Ascending aorta (tissue), 2 donors: ENCODE measurements at regions of chr7 and their contacts with region 1.

Region 1: GRCh38 chr7:113118074-113118959 is at the start of gene SMIM30:
- DNase-seq: peak; percentile 73 to 97
- H3K4me3 ChIP-seq: peak within 1 kb of the TSS; percentile 77 to 79
- H3K27ac ChIP-seq: peak within 1 kb of the TSS; percentile 56 to 75
- H3K4me1 ChIP-seq: peaks cover 0 to 3% of the 10 kb centered on the region in 2 donors
- H3K27me3 ChIP-seq: no peaks in the 10 kb centered on the region
- CTCF ChIP-seq: no peak
- total RNA-seq, gene SMIM30: 35.2 TPM

Region 2: GRCh38 chr7:112743811-112744210 is 374.5 kb before region 1 on chr7:
- intact Hi-C with region 1: no loop called
- DNase-seq: no peak
- H3K4me3 ChIP-seq: no peak overlapping the region
- H3K27ac ChIP-seq: no peak overlapping the region
- H3K4me1 ChIP-seq: no peaks in the 10 kb centered on the region
- H3K27me3 ChIP-seq: no peaks in the 10 kb centered on the region
- CTCF ChIP-seq: no peak

Region 3: GRCh38 chr7:112789817-112790585 is 328.3 kb before region 1 on chr7 and contains the start of gene TMEM168:
- intact Hi-C with region 1: loop called (anchors 2 kb)
- DNase-seq: peak in 1 of 2 donors; percentile 87
- H3K4me3 ChIP-seq: peak within 1 kb of the TSS; percentile 90 to 99
- H3K27ac ChIP-seq: peak within 1 kb of the TSS; percentile 92 to 93
- H3K4me1 ChIP-seq: peaks cover 0 to 6% of the 10 kb centered on the region in 2 donors
- H3K27me3 ChIP-seq: no peaks in the 10 kb centered on the region
- CTCF ChIP-seq: peak in 1 of 3 experiments; percentile 3
- total RNA-seq, gene TMEM168: 8.4 TPM

Region 4: GRCh38 chr7:112939574-112940314 is 178.6 kb before region 1 on chr7:
- intact Hi-C with region 1: loop called (anchors 10 kb)
- DNase-seq: peak; percentile 98 to 100
- H3K4me3 ChIP-seq: peak overlapping the region; percentile 75 to 86
- H3K27ac ChIP-seq: peak overlapping the region; percentile 65 to 74
- H3K4me1 ChIP-seq: peaks cover 0 to 3% of the 10 kb centered on the region in 2 donors
- H3K27me3 ChIP-seq: no peaks in the 10 kb centered on the region
- CTCF ChIP-seq: no peak